Calu3 (cell line): ENCODE measurements at regions of chr11 and their contacts with region 1.

Region 1: GRCh38 chr11:130370845-130371590 is 56.3 kb upstream of the ZBTB44 start:
- DNase-seq: no peak
- H3K4me3 Mint-ChIP-seq: no peak overlapping the region
- H3K27ac Mint-ChIP-seq: no peak overlapping the region
- H3K4me1 Mint-ChIP-seq: no peaks in the 10 kb centered on the region
- H3K27me3 Mint-ChIP-seq: peaks cover 13% of the 10 kb centered on the region
- CTCF ChIP-seq: no peak

Region 2: DNA sequence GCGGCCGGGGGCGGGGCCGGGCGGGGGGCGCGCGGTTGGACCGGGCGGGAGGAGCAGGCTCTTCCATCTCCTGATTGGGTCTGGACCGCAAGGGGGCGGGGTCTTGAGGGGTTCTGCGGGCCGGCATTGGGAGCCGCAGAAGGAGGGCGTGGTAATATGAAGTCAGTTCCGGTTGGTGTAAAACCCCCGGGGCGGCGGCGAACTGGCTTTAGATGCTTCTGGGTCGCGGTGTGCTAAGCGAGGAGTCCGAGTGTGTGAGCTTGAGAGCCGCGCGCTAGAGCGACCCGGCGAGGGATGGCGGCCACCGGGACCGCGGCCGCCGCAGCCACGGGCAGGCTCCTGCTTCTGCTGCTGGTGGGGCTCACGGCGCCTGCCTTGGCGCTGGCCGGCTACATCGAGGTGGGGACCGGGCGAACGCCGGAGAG is 301.3 kb before region 1 on chr11 and contains the start of gene APLP2:
- CTCF ChIA-PET with region 1: no interaction called
- intact Hi-C with region 1: no loop called
- DNase-seq: peak; percentile 97
- H3K4me3 Mint-ChIP-seq: peak within 1 kb of the TSS; percentile 92
- H3K27ac Mint-ChIP-seq: peak within 1 kb of the TSS; percentile 85
- H3K4me1 Mint-ChIP-seq: peaks cover 26% of the 10 kb centered on the region
- H3K27me3 Mint-ChIP-seq: no peaks in the 10 kb centered on the region
- CTCF ChIP-seq: no peak
- total RNA-seq, gene APLP2: 446 and 447 TPM in 2 replicates

Region 3: DNA sequence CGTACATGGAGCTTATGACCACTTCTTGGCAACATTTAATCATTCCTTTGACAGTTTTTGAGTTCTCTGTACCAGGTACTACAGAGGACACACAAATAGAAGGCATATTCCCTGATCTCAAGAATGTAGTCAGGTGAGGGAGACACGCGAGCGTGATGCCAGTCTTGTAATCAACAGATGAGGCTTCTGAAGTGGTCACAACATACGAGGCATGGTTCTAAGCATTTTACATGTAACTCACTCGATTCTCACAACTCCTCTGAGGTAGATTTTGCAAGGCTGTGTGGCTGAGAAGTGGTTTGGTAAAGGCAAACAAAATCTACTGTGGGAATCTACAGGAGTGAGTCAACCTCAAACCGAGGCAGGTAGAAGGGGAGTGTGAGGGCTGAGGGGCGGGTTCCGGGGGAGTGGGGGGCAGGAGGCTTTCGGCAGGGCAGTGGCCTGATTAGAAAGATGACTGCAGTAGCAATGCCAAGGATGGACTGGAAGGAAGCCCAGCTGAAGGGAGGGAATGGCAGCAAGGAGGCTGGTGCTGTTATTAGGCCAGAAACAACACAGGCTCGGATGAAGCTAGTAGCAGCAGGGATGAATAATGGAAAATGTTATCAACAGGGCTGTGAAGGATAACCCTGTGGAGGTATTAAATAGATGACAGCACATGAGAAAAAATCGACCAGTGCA is 147.6 kb before region 1 on chr11:
- CTCF ChIA-PET with region 1: no interaction called
- intact Hi-C with region 1: no loop called
- DNase-seq: no peak
- H3K4me3 Mint-ChIP-seq: no peak overlapping the region
- H3K27ac Mint-ChIP-seq: no peak overlapping the region
- H3K4me1 Mint-ChIP-seq: no peaks in the 10 kb centered on the region
- H3K27me3 Mint-ChIP-seq: no peaks in the 10 kb centered on the region
- CTCF ChIP-seq: no peak

Region 4: DNA sequence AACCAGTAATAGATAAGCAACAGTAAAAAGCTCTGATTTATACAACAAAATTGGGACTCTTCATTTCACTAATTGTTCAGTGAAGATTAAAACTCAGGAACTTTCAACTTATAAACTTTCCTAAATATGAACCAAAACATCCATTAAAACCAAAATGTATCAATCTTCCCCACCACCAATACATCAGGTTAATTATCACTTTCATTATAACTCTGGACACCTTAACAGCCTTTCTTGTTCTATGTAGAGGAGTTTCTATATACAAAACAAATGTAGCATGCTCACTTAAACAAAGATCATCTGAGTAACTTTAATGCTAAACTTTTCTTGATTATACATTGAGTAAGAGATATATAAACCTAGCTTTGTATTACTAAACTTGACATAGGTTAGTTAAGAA is 136.7 kb before region 1 on chr11:
- CTCF ChIA-PET with region 1: no interaction called
- intact Hi-C with region 1: loop called (anchors 5 kb)
- DNase-seq: no peak
- H3K4me3 Mint-ChIP-seq: no peak overlapping the region
- H3K27ac Mint-ChIP-seq: no peak overlapping the region
- H3K4me1 Mint-ChIP-seq: no peaks in the 10 kb centered on the region
- H3K27me3 Mint-ChIP-seq: no peaks in the 10 kb centered on the region
- CTCF ChIP-seq: no peak

Region 5: GRCh38 chr11:130947889-130948288 is 576.9 kb after region 1 on chr11:
- CTCF ChIA-PET with region 1: no interaction called
- intact Hi-C with region 1: no loop called
- DNase-seq: no peak
- H3K4me3 Mint-ChIP-seq: no peak overlapping the region
- H3K27ac Mint-ChIP-seq: no peak overlapping the region
- H3K4me1 Mint-ChIP-seq: no peaks in the 10 kb centered on the region
- H3K27me3 Mint-ChIP-seq: peaks cover 26% of the 10 kb centered on the region
- CTCF ChIP-seq: no peak